Activated naive CD4-positive, alpha-beta T cell treated with anti-CD3 and anti-CD28 coated beads for 36 hours (primary cell): ENCODE measurements at regions of chr7 and their contacts with region 1.

Region 1: DNA sequence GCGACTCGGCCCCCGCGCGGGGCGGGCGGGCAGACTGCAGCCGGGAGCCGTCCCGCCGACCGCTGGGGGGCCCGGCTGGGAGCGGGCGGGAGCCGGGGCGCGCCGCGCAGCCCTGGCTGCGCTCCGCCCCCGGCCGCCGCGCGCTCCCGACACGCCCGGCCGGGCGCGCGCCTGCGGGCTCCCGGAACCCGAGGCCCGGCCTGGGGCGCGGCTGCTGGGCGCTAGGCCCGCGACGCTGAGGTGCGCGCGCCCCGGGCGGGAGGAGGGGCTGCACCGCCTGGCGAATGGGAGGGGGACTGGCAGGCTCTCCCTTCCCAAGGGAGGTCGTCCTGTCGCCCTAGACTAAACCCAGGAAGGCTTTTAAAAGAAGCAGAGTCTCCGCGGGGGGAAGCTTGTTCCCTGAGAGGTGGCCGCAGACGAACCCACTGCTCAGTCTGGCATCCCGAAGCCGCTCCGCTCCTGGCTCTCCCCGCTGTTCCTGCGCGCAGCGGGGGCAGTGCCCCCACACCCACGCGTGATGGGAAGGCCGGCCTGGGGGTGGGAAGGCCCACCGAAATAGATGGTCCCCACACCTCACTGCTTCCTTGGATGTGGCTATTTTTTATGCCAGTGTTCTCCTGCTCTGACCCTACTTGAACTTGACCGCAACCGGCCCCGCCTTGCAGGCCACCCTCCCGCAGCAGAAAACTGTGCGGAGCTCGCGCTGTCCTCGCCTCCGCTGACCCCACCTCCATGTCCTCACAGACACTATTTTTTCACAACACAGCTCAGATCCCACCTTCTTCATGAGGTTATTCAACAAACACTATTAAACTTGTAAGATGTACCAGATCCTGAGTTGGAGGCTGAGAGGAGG is at the start of gene VOPP1:
- DNase-seq: peak; percentile 53
- H3K4me3 Mint-ChIP-seq: peak within 1 kb of the TSS; percentile 91
- H3K27ac Mint-ChIP-seq: peak within 1 kb of the TSS; percentile 97
- H3K4me1 Mint-ChIP-seq: peaks cover 63% of the 10 kb centered on the region
- H3K27me3 Mint-ChIP-seq: no peaks in the 10 kb centered on the region
- total RNA-seq, gene VOPP1: 100 to 102 TPM

Region 2: DNA sequence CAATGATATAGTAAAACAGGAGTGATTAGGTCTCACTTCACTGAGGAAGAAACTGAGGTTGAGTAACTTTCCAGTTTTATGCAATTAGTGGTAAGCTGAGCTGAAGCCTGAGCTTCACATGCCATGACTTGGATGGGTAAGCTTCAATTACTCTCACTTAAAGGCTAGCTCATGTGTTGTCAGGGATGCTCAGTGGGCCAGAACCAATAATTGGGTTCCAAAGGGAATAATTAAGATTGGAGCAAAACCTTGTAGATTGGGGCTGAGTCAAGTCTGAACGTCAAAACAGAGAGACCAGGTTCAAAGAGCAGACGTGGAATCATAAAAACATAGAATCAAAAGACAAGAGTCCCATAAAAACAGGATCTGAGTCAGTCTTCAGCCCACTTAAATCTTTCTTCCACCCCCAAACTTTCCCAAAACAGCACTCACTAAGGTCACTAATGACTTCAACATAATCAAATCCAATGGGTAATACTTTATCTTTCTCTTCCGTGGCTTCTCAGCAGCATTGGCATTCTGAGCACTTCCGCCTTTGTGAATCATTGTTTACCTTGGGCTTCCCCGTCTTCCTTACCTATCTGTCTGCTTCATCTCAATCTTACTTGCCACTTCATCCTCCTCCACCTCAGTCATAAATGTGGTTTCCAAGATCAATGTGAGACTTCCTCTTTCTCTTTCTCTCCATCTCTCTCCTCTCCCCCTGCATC is 576.8 kb before region 1 on chr7:
- CTCF ChIA-PET with region 1: no interaction called
- intact Hi-C with region 1: loop called (anchors 10 kb)
- DNase-seq: peak; percentile 59
- H3K4me3 Mint-ChIP-seq: no peak overlapping the region
- H3K27ac Mint-ChIP-seq: peak overlapping the region; percentile 87
- H3K4me1 Mint-ChIP-seq: peaks cover 25% of the 10 kb centered on the region
- H3K27me3 Mint-ChIP-seq: peaks cover 5% of the 10 kb centered on the region

Region 3: GRCh38 chr7:55381696-55382095 is 190.9 kb before region 1 on chr7:
- CTCF ChIA-PET with region 1: no interaction called
- intact Hi-C with region 1: no loop called
- DNase-seq: no peak
- H3K4me3 Mint-ChIP-seq: no peak overlapping the region
- H3K27ac Mint-ChIP-seq: no peak overlapping the region
- H3K4me1 Mint-ChIP-seq: peaks cover 2% of the 10 kb centered on the region
- H3K27me3 Mint-ChIP-seq: no peaks in the 10 kb centered on the region

Region 4: GRCh38 chr7:55432939-55433784 is 139.4 kb before region 1 on chr7:
- CTCF ChIA-PET with region 1: interaction called, 6 read pairs
- intact Hi-C with region 1: loop called (anchors 1 kb)
- DNase-seq: peak; percentile 56
- H3K4me3 Mint-ChIP-seq: no peak overlapping the region
- H3K27ac Mint-ChIP-seq: no peak overlapping the region
- H3K4me1 Mint-ChIP-seq: peaks cover 37% of the 10 kb centered on the region
- H3K27me3 Mint-ChIP-seq: no peaks in the 10 kb centered on the region

Region 5: DNA sequence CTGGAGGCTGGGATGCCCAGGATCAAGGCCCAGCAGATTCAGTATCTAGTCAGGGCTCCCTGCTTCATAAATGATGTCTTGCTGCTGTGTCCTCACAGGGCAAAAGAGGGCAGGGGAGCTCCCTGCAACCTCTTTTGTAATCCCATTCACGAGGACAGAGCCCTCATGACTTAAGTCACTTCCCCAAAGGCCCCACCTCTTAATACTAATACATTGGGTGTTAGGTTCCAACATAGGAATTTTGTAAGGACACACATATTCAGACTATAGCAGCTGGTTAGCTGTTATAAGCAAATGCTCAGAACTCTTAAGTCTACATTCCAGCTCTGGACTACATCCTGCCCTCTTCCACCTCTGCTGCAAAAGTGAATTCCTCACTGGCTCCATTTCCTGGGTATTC is 63.3 kb before region 1 on chr7:
- CTCF ChIA-PET with region 1: interaction called, 4 read pairs
- intact Hi-C with region 1: loop called (anchors 1 kb)
- DNase-seq: peak; percentile 36
- H3K4me3 Mint-ChIP-seq: no peak overlapping the region
- H3K27ac Mint-ChIP-seq: peak overlapping the region; percentile 85
- H3K4me1 Mint-ChIP-seq: peaks cover 89% of the 10 kb centered on the region
- H3K27me3 Mint-ChIP-seq: no peaks in the 10 kb centered on the region

Region 6: DNA sequence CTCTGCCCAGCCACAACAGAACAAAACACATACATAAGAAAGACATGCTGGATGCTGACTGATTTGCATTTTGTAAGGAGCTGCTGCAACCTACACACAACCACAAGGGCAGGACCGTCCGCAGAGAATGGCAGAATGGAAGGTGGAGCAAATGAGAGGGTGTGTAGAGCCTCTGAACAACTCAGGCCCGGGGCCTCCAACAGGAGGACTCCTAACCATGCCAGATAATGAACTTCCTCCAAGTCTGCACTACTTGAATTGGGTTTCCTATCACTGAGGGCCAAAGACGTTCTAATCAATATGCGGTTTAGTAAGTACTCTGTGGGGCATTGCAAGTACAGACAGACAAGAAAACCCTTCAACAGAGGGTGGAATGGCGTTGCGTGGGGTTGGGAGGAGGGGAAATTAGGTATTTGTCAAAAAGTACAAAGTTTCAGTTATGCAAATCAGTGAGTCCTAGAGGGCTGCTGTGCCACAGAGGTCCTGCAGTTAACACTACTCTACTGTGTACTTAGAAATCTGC is 14.9 kb before region 1 on chr7:
- CTCF ChIA-PET with region 1: interaction called, 7 read pairs
- intact Hi-C with region 1: loop called (anchors 1 kb)
- DNase-seq: peak; percentile 39
- H3K4me3 Mint-ChIP-seq: no peak overlapping the region
- H3K27ac Mint-ChIP-seq: peak overlapping the region; percentile 50
- H3K4me1 Mint-ChIP-seq: peaks cover 90% of the 10 kb centered on the region
- H3K27me3 Mint-ChIP-seq: no peaks in the 10 kb centered on the region

Region 7: DNA sequence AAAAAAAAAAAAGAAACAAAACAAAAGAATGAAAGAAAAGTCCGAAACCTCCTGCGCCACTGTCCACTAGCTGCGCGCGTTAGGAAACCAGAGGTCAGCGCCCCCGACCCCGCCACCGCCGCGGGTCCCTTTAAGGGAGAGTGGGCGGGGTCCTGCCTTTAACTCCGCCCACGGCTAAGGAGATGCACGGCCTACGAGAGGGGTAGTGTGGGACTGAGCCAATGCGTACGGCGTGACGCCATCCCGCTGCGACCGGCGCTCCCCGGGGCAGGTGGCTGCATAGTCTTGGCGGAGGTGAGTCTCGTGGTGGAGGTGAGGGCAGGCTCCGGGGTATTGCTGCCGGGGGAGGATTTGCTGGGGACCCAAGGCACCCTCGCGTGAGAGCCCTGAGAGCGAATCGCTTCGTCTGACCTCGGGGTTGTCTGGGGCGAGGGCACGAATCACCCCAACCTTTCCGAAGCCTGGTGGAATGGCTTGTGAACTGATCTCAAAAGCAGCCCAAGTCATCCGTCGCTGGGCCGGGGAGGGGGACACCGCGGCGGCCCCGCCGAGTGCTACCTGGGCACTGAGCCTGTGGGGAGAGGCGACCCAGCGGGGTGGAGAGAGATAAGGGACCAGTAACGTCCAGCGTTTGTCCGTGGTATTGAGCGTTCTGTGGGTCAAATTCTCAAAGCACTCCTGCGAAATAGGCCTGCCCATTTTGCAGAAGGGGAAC is 379.2 kb after region 1 on chr7 and contains the start of gene MRPS17:
- CTCF ChIA-PET with region 1: no interaction called
- intact Hi-C with region 1: loop called (anchors 5 kb)
- DNase-seq: peak; percentile 96
- H3K4me3 Mint-ChIP-seq: peak within 1 kb of the TSS; percentile 99
- H3K27ac Mint-ChIP-seq: peak within 1 kb of the TSS; percentile 94
- H3K4me1 Mint-ChIP-seq: peaks cover 28% of the 10 kb centered on the region
- H3K27me3 Mint-ChIP-seq: peaks cover 2% of the 10 kb centered on the region
- total RNA-seq, gene MRPS17: 17.3 to 18.7 TPM